ENCODE measurements at regions of chr5 and their contacts with region 1.

Region 1: GRCh38 chr5:140690941-140691924 is at the starts of genes HARS1 and HARS2:
- DNase-seq: peak; percentile 89 to 94
- ATAC-seq: peak; percentile 98
- H3K4me3 ChIP-seq: peak within 1 kb of the TSS; percentile 99
- H3K27ac ChIP-seq: peak within 1 kb of the TSS; percentile 92
- H3K4me1 ChIP-seq: peaks cover 18% of the 10 kb centered on the region
- H3K27me3 ChIP-seq: no peaks in the 10 kb centered on the region
- CTCF ChIP-seq: no peak
- total RNA-seq, gene HARS1: 29.5 to 48.1 (median 38.9) TPM
- total RNA-seq, gene HARS2: 19.8 to 35.1 (median 23.2) TPM

Region 2: DNA sequence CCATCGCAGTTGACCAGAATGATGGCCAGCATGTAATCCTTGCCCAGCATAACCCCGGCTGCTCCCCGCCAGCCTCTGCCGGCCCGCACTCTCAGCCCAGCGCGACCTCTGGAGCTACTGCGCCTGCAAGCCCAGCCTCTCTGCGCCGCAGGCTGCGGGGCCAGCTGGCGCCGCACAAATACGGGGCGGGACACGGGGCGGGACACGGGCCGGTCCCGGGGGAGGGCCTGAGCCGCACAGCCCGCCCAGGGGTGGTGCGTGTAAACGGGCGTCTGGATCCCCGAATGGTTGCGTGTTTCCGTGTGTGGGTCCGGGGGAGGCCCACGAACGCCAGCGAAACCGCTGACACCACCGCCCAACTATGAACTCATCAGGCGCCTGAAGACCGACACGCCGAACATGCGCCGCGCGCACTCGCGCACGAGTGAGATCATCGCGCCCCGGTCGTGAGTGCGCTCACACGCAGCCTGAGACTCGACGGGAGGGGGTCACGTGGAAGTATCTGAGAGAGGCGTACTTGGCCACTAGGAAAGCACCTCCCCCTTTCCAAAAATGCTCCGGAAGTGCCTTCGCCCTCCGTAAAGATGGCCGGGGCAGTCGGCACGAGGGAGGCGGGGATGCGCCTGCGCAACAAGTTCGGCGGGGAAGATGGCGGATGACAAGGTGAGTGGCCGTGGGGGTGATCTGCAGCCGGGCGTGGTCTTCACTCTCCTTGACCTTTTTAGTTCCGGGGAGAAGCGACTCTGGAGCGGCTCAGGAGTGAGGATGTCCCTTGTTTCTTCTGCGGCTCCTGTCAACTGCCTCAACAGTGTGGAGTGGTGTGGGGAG is 126.8 kb before region 1 on chr5 and contains the starts of genes APBB3 and SLC35A4:
- intact Hi-C with region 1: loop called in 1 of 2 experiments (anchors 5 kb)
- DNase-seq: peak; percentile 98 to 99
- ATAC-seq: peak; percentile 89 to 90 (median 90)
- H3K4me3 ChIP-seq: peak within 1 kb of the TSS; percentile 82
- H3K27ac ChIP-seq: peak within 1 kb of the TSS; percentile 97
- H3K4me1 ChIP-seq: peaks cover 68% of the 10 kb centered on the region
- H3K27me3 ChIP-seq: no peaks in the 10 kb centered on the region
- CTCF ChIP-seq: no peak
- total RNA-seq, gene APBB3: 9.5 to 25.4 (median 16.4) TPM
- total RNA-seq, gene SLC35A4: 95.7 to 129 (median 117) TPM

Region 3: DNA sequence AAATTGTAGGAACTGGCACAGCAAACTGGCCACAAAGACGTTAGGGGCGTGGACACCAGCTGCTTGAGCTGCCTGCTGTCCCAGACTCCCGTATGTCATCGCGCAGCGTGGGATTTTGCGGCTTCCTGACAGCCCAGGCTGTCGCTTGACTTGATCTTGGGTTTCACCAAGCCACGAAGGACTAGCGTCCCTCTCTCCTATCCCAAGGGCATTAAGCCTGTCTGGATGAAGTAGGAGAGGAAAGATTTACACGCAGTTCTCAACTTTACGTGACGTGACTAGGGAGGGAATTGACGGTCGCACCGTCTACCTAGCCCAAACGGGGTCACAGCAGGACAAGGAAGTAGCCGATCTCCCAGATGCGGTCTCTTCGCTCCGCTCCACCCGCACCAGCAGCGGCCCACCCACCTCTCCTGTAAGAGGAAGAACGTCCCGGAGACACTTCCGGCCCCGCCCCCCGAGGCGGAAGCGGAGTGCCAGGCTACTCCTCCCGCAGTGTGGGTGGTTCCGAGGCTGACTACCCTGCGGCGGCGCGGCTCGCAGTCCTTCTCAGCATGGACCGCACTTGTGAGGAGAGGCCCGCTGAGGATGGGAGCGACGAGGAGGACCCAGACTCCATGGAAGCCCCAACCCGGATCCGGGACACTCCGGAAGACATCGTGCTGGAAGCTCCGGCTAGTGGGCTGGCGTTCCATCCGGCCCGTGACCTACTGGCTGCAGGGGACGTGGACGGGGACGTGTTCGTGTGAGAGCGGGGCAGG is 26.7 kb before region 1 on chr5 and contains the start of gene WDR55:
- intact Hi-C with region 1: loop called (anchors 2 kb)
- DNase-seq: peak; percentile 97 to 98
- ATAC-seq: peak; percentile 98 to 99 (median 98)
- H3K4me3 ChIP-seq: peak within 1 kb of the TSS; percentile 85
- H3K27ac ChIP-seq: peak within 1 kb of the TSS; percentile 89
- H3K4me1 ChIP-seq: peaks cover 17% of the 10 kb centered on the region
- H3K27me3 ChIP-seq: no peaks in the 10 kb centered on the region
- CTCF ChIP-seq: no peak
- total RNA-seq, gene WDR55: 9.9 to 20.9 (median 13.3) TPM